K562 (cell line): ENCODE measurements at regions of chr4 and their contacts with region 1.

Region 1: DNA sequence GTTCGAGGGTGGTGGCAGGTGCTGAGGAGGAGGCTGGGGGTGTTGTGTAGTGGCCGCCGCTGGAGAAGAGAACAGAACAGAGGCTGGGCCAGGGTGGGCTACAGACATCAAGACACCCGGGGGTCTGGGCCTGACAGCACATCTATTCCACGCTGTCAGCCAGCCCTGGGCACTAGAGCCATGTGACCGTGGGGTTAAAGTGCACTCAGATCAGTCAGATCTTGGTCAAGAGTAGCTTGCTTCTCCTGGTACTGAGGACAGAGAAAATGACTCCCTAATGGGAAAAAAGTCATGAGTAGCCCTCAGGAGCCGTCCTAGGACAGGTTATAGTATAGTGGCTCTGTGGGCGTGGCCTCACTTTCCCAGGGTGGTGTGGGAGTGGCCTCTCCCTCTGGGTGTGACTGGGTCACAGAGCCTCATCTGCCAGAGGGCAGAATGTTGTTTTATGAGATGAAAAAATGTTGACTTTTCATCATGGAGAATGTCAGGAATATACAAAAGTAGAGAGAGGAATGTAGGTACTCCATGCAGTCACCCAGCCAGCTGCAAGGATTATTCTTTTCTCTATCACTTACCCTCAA is 19.4 kb downstream of the TRMT44 start:
- DNase-seq: peak in 2 of 4 experiments; percentile 13 to 37
- ATAC-seq: peak; percentile 91
- H3K4me3 ChIP-seq: no peak overlapping the region
- H3K27ac ChIP-seq: no peak overlapping the region
- H3K4me1 ChIP-seq: no peaks in the 10 kb centered on the region; a peak in 1 of 5 replicates
- H3K27me3 ChIP-seq: no peaks in the 10 kb centered on the region
- CTCF ChIP-seq: no peak
- EP300 ChIP-seq: no peak
- POLR2A ChIP-seq: no peak
- RAD21 ChIP-seq: no peak

Region 2: DNA sequence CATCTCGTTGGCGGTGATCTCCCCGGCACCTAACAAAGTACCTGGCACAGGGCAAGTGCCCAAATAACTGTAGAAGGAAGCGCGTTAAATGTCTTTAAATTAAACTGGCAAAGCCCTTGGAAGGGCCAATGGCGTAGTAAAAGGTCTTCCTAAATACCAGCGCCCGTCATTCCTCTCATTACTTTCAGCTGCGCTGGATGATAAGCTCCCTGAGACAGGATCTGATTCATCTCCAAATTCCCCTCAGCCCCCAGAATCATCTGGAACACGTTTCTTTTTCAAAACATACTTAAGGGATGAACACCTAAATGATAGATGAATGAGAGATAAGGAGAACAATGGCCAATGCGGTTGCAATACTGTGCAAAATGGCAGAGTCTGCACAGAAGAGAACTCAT is 615.4 kb before region 1 on chr4:
- CTCF ChIA-PET with region 1: no interaction called
- POLR2A ChIA-PET with region 1: no interaction called
- in situ Hi-C with region 1: no loop called
- intact Hi-C with region 1: no loop called
- DNase-seq: no peak
- ATAC-seq: no peak
- H3K4me3 ChIP-seq: no peak overlapping the region
- H3K27ac ChIP-seq: no peak overlapping the region
- H3K4me1 ChIP-seq: no peaks in the 10 kb centered on the region
- H3K27me3 ChIP-seq: peaks cover 3 to 34% of the 10 kb centered on the region in 2 experiments; a peak in 4 of 5 replicates
- CTCF ChIP-seq: peak in 1 of 3 experiments; percentile 4; a peak in 1 of 6 replicates
- EP300 ChIP-seq: no peak
- POLR2A ChIP-seq: no peak
- RAD21 ChIP-seq: no peak

Region 3: GRCh38 chr4:8594097-8595038 is 134.4 kb after region 1 on chr4:
- CTCF ChIA-PET with region 1: no interaction called
- POLR2A ChIA-PET with region 1: no interaction called
- in situ Hi-C with region 1: loop called (anchors 5 kb)
- intact Hi-C with region 1: no loop called
- DNase-seq: peak; percentile 84 to 94 (median 92)
- ATAC-seq: peak; percentile 87
- H3K4me3 ChIP-seq: no peak overlapping the region
- H3K27ac ChIP-seq: no peak overlapping the region
- H3K4me1 ChIP-seq: peaks cover 13 to 38% of the 10 kb centered on the region in 2 experiments; a peak in 4 of 5 replicates
- H3K27me3 ChIP-seq: peaks cover 7 to 21% of the 10 kb centered on the region in 2 experiments; a peak in 3 of 5 replicates
- CTCF ChIP-seq: peak; percentile 78 to 94 (median 81)
- EP300 ChIP-seq: no peak
- POLR2A ChIP-seq: no peak
- RAD21 ChIP-seq: peak; percentile 91 to 95